Activated B cell treated with CpG ODN at 0.5 μM for 24 hours (primary cell): ENCODE measurements at regions of chr22 and their contacts with region 1.

Region 1: GRCh38 chr22:19773325-19774040 is 12.9 kb downstream of the TBX1 start:
- DNase-seq: no peak
- ATAC-seq: no peak
- H3K4me3 Mint-ChIP-seq: peak overlapping the region; percentile 71
- H3K27ac Mint-ChIP-seq: no peak overlapping the region
- H3K4me1 Mint-ChIP-seq: peaks cover 31% of the 10 kb centered on the region
- H3K27me3 Mint-ChIP-seq: peaks cover 61% of the 10 kb centered on the region
- CTCF ChIP-seq: no peak

Region 2: DNA sequence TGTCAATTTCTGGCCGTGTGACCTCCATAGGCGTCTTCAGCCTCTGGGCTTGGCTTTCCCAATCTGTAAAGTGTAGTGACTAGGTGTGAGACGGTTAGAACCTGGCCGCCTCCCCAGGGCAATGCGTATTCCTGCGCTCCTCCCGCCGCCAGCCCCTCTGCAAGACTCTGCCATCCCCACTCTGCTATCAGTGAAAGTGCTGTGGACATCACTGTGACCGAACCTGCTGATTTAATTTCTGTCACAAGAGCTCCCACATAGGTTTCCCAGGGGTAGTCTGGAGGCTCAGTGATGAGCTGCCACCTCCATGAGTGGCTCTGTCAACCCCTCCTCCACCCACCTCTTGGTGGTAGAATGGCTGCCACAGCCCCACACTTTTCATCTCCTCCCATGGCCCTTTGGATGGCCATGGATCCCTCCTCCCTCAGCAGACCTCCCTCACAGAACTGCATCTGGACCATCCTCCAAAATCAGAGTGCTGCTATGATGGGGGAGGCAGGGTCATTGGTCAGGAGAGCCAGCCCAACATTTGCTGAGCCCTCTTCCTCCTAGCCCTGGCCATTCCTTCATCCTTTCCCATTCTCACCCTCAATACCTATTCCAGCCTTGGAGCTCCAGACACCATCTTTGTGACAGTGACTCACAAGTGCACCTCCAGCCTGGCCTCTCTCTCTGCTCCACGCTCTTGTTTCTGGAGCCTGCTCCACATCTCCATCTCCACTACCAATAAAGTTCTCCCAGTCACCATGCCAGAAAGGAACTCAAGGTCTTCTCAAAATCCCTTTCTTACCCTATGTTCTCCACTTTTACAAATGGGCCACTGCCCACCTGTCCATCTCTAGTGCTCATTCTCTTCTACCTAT is 621.9 kb before region 1 on chr22:
- CTCF ChIA-PET with region 1: no interaction called
- POLR2A ChIA-PET with region 1: interaction called, 10 read pairs
- intact Hi-C with region 1: no loop called
- DNase-seq: no peak
- ATAC-seq: no peak
- H3K4me3 Mint-ChIP-seq: peak overlapping the region; percentile 42
- H3K27ac Mint-ChIP-seq: no peak overlapping the region
- H3K4me1 Mint-ChIP-seq: peaks cover 6% of the 10 kb centered on the region
- H3K27me3 Mint-ChIP-seq: peaks cover 38% of the 10 kb centered on the region
- CTCF ChIP-seq: no peak